Ascending aorta (tissue), 2 donors: ENCODE measurements at regions of chr12 and their contacts with region 1.

Region 1: DNA sequence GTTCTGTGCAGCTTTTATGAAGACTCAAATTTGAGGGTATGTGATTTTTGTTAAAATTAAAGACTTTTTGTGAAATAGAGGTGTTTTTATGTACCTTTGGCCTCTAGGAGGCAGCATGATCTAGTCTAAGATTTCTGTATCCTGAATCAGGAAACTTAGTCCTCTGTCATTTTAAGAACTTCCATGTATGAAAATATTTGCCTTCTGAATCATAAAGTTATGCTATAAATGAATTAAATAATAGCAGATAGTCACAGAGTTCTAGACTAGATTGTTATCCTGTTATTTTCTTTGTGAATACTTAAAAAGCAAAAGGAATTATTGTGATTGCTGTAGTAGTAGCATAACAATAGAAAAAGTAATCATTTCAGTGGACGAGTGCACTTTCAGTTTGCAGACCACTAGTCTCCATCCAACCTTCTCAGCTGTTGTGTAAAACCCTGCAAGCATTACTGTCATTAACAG is 56.3 kb downstream of the FGD4 start:
- DNase-seq: no peak
- H3K4me3 ChIP-seq: peak overlapping the region; percentile 47 to 54
- H3K27ac ChIP-seq: no peak overlapping the region
- H3K4me1 ChIP-seq: peaks cover 0 to 24% of the 10 kb centered on the region in 2 donors
- H3K27me3 ChIP-seq: no peaks in the 10 kb centered on the region
- CTCF ChIP-seq: peak; percentile 45 to 71 (median 46)

Region 2: DNA sequence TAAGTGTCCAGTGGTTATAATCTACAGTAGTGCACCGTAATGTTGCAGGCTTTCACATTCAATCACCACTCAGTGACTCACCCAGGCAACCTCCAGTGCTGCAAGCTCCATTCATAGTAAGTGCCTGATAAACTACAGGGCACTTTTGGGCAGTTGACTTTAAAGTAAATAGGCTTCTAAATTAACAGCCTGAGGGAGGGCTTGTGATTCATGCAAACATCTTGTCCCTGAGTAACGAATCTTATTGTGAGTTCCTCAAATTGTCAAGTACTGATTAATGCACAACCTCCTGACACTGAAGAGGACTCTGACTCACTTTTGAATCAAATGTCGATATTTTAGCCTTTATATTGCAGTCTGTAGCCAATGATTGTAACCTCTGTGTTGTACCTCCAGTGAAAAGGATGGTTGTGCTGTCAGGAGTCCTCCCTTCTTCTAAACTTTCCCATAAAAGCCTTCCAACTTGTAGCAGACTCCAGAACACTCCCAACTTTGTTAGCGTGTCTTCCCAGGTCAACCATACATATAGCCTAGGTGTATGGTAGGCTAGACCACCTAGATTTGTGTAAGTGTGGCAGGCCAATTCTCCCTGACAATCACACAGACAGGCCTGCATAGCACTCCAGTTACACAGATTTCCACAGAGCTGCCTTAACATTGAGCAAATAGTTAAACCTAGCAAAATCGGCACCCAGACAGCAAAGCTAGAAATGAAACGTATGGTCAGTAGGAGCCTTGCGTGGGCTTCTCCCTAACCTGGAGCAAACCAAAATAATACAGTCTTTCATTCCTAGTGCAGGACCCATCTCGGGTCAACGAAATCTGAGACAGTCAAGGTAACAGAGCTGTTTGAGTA is 403.9 kb before region 1 on chr12:
- intact Hi-C with region 1: no loop called
- DNase-seq: no peak
- H3K4me3 ChIP-seq: no peak overlapping the region
- H3K27ac ChIP-seq: no peak overlapping the region
- H3K4me1 ChIP-seq: no peaks in the 10 kb centered on the region
- H3K27me3 ChIP-seq: no peaks in the 10 kb centered on the region
- CTCF ChIP-seq: no peak

Region 3: GRCh38 chr12:32170437-32170998 is 285.1 kb before region 1 on chr12:
- intact Hi-C with region 1: no loop called
- DNase-seq: no peak
- H3K4me3 ChIP-seq: no peak overlapping the region
- H3K27ac ChIP-seq: no peak overlapping the region
- H3K4me1 ChIP-seq: no peaks in the 10 kb centered on the region
- H3K27me3 ChIP-seq: no peaks in the 10 kb centered on the region
- CTCF ChIP-seq: no peak

Region 4: GRCh38 chr12:32533971-32534590 is 78.4 kb after region 1 on chr12:
- intact Hi-C with region 1: loop called (anchors 5 kb)
- DNase-seq: peak in 1 of 2 donors; percentile 90
- H3K4me3 ChIP-seq: peak overlapping the region; percentile 48 to 67
- H3K27ac ChIP-seq: peak overlapping the region; percentile 74 to 85
- H3K4me1 ChIP-seq: peaks cover 6 to 28% of the 10 kb centered on the region in 2 donors
- H3K27me3 ChIP-seq: no peaks in the 10 kb centered on the region
- CTCF ChIP-seq: no peak

Region 5: GRCh38 chr12:32659908-32660440 is 204.3 kb after region 1 on chr12:
- intact Hi-C with region 1: loop called (anchors 1 kb)
- DNase-seq: no peak
- H3K4me3 ChIP-seq: no peak overlapping the region
- H3K27ac ChIP-seq: no peak overlapping the region
- H3K4me1 ChIP-seq: no peaks in the 10 kb centered on the region
- H3K27me3 ChIP-seq: no peaks in the 10 kb centered on the region
- CTCF ChIP-seq: no peak

Region 6: GRCh38 chr12:32671930-32672780 is 216.5 kb after region 1 on chr12:
- intact Hi-C with region 1: loop called (anchors 5 kb)
- DNase-seq: no peak
- H3K4me3 ChIP-seq: no peak overlapping the region
- H3K27ac ChIP-seq: no peak overlapping the region
- H3K4me1 ChIP-seq: no peaks in the 10 kb centered on the region
- H3K27me3 ChIP-seq: no peaks in the 10 kb centered on the region
- CTCF ChIP-seq: peak; percentile 36 to 55 (median 37)